CD4-positive, alpha-beta memory T cell (primary cell): ENCODE measurements at regions of chr14 and their contacts with region 1.

Region 1: DNA sequence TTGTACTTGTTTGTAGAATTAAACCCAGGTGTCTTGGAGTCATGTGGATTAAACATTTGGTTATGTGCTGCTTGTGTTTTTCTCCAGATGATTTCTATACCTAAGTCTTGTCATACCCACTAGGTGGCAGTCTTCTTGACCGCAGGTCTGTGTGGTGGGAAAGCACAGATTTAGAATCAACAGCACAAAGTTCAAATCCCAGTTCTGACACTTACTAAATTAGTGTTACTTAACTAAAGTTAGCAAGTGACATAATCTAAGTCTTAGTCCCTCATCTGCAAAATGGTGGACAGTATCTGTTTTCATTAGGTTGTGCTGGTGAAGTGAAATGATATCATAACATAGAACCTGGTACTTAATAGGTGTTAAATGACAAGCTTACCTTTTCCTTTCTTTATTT is 151.0 kb upstream of the ARHGAP5 start:
- DNase-seq: peak in 4 of 5 donors; percentile 47 to 54 (median 52)
- H3K4me3 ChIP-seq: no peak overlapping the region
- H3K4me3 Mint-ChIP-seq: no peak overlapping the region
- H3K27ac ChIP-seq: no peak overlapping the region
- H3K27ac Mint-ChIP-seq: peak overlapping the region in 1 of 7 donors; percentile 63
- H3K4me1 ChIP-seq: peaks cover 11% of the 10 kb centered on the region
- H3K4me1 Mint-ChIP-seq: peaks cover 7 to 14% (median 12%) of the 10 kb centered on the region in 4 donors
- H3K27me3 ChIP-seq: no peaks in the 10 kb centered on the region
- H3K27me3 Mint-ChIP-seq: no peaks in the 10 kb centered on the region

Region 2: DNA sequence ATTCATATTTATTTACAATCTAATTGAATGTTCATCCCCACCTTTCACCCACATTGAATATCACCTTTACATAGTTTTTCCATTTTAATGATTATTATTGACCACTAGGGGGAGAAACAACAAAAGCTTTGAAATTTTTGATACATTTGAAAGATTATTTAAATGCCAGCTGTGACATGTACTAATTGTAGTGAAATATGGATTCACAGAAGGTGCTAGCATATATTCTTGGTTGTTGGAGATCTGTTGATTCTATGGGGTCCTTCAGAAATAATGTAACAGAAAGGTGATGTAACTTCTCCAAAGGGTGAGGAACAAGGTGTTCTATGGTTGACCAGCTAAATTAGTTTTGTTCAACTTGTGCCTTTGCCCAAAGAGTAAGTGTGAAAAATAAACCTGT is 415.9 kb before region 1 on chr14:
- CTCF ChIA-PET with region 1: interaction called, 4 read pairs
- POLR2A ChIA-PET with region 1: no interaction called
- intact Hi-C with region 1: loop called (anchors 5 kb)
- DNase-seq: peak in 4 of 5 donors; percentile 16 to 24 (median 22)
- H3K4me3 ChIP-seq: no peak overlapping the region
- H3K4me3 Mint-ChIP-seq: no peak overlapping the region
- H3K27ac ChIP-seq: no peak overlapping the region
- H3K27ac Mint-ChIP-seq: no peak overlapping the region
- H3K4me1 ChIP-seq: no peaks in the 10 kb centered on the region
- H3K4me1 Mint-ChIP-seq: no peaks in the 10 kb centered on the region
- H3K27me3 ChIP-seq: no peaks in the 10 kb centered on the region
- H3K27me3 Mint-ChIP-seq: peaks cover 0 to 6% of the 10 kb centered on the region in 2 donors

Region 3: DNA sequence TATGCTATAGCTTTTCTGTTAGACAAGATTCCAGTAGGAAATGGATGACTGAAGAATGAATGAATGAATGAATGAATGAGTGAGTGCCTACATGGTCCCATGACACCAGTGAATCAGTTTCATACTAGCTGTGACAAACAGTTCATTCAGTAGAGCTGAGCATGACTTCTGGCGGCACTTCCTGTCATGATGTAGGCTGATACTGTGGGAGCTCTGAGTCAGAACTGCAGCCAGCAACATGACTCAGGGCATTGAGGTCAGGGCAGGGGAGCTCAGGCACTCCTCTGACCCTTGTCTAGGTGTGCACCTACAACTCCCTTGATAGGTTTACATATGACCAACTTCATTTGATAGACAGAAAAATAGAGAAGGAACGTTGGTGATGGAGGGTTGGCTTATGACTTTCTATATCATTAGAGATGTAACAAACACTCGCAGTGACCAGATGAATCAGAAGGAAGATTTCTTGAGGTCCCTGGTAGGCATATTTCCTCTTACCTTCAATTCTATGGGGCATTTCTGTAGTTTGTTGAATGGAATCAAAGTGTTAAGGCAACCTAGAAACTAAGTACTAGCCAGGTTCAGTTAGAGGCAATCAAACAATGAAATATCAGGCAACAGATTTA is 11.7 kb after region 1 on chr14:
- CTCF ChIA-PET with region 1: interaction called, 59 read pairs
- POLR2A ChIA-PET with region 1: no interaction called
- intact Hi-C with region 1: no loop called
- DNase-seq: peak; percentile 12 to 78 (median 20)
- H3K4me3 ChIP-seq: no peak overlapping the region
- H3K4me3 Mint-ChIP-seq: peak overlapping the region in 1 of 8 donors; percentile 2
- H3K27ac ChIP-seq: no peak overlapping the region
- H3K27ac Mint-ChIP-seq: peak overlapping the region; percentile 57 to 91 (median 80)
- H3K4me1 ChIP-seq: peaks cover 9% of the 10 kb centered on the region
- H3K4me1 Mint-ChIP-seq: peaks cover 11 to 17% (median 16%) of the 10 kb centered on the region in 4 donors
- H3K27me3 ChIP-seq: no peaks in the 10 kb centered on the region
- H3K27me3 Mint-ChIP-seq: no peaks in the 10 kb centered on the region

Region 4: DNA sequence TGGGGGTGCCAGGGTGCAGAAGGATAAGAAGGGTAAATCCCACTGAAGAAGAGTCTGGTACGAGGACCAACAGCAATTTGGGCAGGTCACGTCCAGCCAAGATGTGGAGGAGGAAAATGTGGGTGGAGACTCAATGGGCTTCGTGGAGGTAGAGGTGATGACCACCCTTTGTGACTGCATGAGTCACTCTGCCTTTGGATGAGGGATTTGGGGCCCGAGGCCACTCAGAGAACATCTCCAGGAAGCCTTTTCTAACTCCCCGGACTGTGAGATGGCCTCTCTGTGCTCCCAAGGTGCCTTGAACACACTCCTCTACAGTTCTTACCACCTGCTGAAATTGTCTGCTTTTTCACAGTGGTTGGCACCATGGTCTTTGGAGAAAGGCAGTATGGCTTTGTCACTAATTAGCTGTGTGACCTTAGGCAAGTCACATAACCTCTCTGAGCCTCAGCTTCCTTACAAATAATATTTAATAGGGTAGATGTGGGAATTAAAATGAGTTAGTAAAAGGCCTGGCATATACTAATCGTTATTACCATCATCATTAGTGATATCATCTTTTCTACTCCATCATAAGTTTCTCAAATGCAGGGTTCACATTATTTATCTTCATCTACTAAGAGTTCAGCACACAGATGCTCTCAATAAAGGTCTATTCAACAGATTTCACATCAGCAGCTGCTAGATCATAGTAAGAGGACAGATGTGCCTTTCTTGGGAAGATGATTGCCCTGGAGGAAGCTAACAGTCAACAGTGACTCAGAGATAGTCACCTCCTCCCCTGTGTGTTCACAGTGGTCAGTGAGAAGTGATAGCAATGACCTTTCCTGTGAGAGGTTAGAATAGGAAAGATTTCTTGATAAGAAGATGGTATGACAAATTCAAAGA is 84.1 kb after region 1 on chr14:
- CTCF ChIA-PET with region 1: no interaction called
- POLR2A ChIA-PET with region 1: no interaction called
- intact Hi-C with region 1: loop called (anchors 5 kb)
- DNase-seq: no peak
- H3K4me3 ChIP-seq: no peak overlapping the region
- H3K4me3 Mint-ChIP-seq: no peak overlapping the region
- H3K27ac ChIP-seq: no peak overlapping the region
- H3K27ac Mint-ChIP-seq: no peak overlapping the region
- H3K4me1 ChIP-seq: no peaks in the 10 kb centered on the region
- H3K4me1 Mint-ChIP-seq: peaks cover 0 to 4% (median under 1%) of the 10 kb centered on the region in 4 donors
- H3K27me3 ChIP-seq: no peaks in the 10 kb centered on the region
- H3K27me3 Mint-ChIP-seq: peaks cover 0 to 4% of the 10 kb centered on the region in 2 donors

Region 5: GRCh38 chr14:32259368-32260013 is 333.4 kb after region 1 on chr14:
- CTCF ChIA-PET with region 1: interaction called, 174 read pairs
- POLR2A ChIA-PET with region 1: no interaction called
- intact Hi-C with region 1: no loop called
- DNase-seq: no peak
- H3K4me3 ChIP-seq: no peak overlapping the region
- H3K4me3 Mint-ChIP-seq: no peak overlapping the region
- H3K27ac ChIP-seq: no peak overlapping the region
- H3K27ac Mint-ChIP-seq: peak overlapping the region in 1 of 7 donors; percentile 0
- H3K4me1 ChIP-seq: no peaks in the 10 kb centered on the region
- H3K4me1 Mint-ChIP-seq: peaks cover 0 to 10% (median 4%) of the 10 kb centered on the region in 4 donors
- H3K27me3 ChIP-seq: no peaks in the 10 kb centered on the region
- H3K27me3 Mint-ChIP-seq: peaks cover 0 to 2% of the 10 kb centered on the region in 2 donors

Region 6: DNA sequence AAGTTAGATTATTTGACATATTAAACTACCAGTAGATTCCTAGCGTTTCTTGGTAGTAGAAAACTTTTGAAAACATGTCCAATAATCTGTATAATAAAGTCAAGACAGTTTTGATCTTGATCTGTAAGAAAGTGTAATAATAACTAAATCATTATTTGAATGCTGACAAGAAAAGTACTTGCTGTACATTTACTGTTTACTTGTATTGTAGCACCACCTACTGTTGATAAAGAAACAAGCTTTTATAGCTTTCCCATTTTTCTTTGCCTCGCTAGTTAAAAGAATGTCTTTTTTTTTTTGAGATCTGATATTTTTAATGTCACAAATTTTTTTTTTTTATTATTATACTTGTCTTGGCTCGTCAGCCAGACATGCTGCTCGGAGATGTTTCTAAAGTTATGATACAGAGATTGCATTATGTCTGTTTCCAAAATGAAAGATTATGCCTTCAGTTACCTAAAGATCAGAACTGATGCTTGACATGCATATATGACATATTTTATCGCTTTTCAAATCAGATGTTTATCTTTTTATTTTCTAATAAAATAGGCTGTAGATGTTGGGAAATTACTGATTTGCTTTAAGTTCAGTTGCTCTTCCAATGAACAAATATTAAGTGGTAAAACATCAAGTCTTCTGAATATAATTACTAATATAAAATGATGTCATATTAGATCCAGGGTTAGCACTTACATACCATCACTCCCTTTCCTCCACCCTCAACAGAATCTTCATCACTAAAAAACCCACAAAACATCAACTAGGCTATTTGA is 543.5 kb after region 1 on chr14:
- CTCF ChIA-PET with region 1: no interaction called
- POLR2A ChIA-PET with region 1: no interaction called
- intact Hi-C with region 1: loop called (anchors 2 kb)
- DNase-seq: peak in 2 of 5 donors; percentile 2 to 5
- H3K4me3 ChIP-seq: no peak overlapping the region
- H3K4me3 Mint-ChIP-seq: no peak overlapping the region
- H3K27ac ChIP-seq: no peak overlapping the region
- H3K27ac Mint-ChIP-seq: no peak overlapping the region
- H3K4me1 ChIP-seq: no peaks in the 10 kb centered on the region
- H3K4me1 Mint-ChIP-seq: no peaks in the 10 kb centered on the region
- H3K27me3 ChIP-seq: no peaks in the 10 kb centered on the region
- H3K27me3 Mint-ChIP-seq: peaks cover 2 to 5% of the 10 kb centered on the region in 2 donors